Calu3 (cell line): ENCODE measurements at regions of chr2 and their contacts with region 1.

Region 1: GRCh38 chr2:213251618-213252017 is 32.6 kb upstream of the SPAG16 start:
- DNase-seq: no peak
- H3K4me3 Mint-ChIP-seq: no peak overlapping the region
- H3K27ac Mint-ChIP-seq: peak overlapping the region; percentile 40
- H3K4me1 Mint-ChIP-seq: peaks cover 16% of the 10 kb centered on the region
- H3K27me3 Mint-ChIP-seq: no peaks in the 10 kb centered on the region
- CTCF ChIP-seq: peak; percentile 62

Region 2: GRCh38 chr2:212609479-212609878 is 642.1 kb before region 1 on chr2:
- CTCF ChIA-PET with region 1: no interaction called
- intact Hi-C with region 1: no loop called
- DNase-seq: no peak
- H3K4me3 Mint-ChIP-seq: no peak overlapping the region
- H3K27ac Mint-ChIP-seq: no peak overlapping the region
- H3K4me1 Mint-ChIP-seq: no peaks in the 10 kb centered on the region
- H3K27me3 Mint-ChIP-seq: no peaks in the 10 kb centered on the region
- CTCF ChIP-seq: no peak

Region 3: GRCh38 chr2:212912445-212913103 is 339.0 kb before region 1 on chr2:
- CTCF ChIA-PET with region 1: no interaction called
- intact Hi-C with region 1: no loop called
- DNase-seq: peak; percentile 58
- H3K4me3 Mint-ChIP-seq: peak overlapping the region; percentile 63
- H3K27ac Mint-ChIP-seq: peak overlapping the region; percentile 95
- H3K4me1 Mint-ChIP-seq: peaks cover 56% of the 10 kb centered on the region
- H3K27me3 Mint-ChIP-seq: no peaks in the 10 kb centered on the region
- CTCF ChIP-seq: no peak

Region 4: GRCh38 chr2:213490087-213490486 is 238.5 kb after region 1 on chr2:
- CTCF ChIA-PET with region 1: interaction called, 4 read pairs
- intact Hi-C with region 1: loop called (anchors 10 kb)
- DNase-seq: no peak
- H3K4me3 Mint-ChIP-seq: no peak overlapping the region
- H3K27ac Mint-ChIP-seq: no peak overlapping the region
- H3K4me1 Mint-ChIP-seq: no peaks in the 10 kb centered on the region
- H3K27me3 Mint-ChIP-seq: no peaks in the 10 kb centered on the region
- CTCF ChIP-seq: no peak

Region 5: DNA sequence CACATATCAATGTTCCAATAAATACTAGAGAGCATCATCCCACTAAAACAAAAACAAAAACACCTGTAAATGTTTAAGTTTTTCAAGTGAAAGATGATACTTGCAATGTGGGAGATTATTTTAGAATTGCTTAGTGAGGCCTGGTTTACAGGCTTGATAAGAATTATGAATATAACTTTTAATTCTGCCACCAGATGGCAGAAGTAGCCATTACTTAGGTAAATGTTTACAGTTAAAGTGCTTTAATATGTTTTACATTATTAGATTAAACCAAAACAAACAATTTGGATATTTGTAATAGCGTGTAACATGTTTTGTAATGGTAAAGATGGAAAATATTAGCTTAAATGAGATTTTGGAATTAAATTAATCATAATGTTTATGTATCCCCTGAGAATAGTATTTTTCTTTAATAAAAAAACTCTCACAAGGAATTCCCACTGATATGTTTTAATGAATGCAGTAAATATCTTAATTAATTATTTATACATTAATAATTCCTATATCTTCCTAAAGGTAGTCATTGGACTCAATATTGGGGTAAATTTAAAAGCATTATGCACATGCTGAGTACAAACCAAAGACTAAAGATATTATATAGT is 554.6 kb after region 1 on chr2:
- CTCF ChIA-PET with region 1: no interaction called
- intact Hi-C with region 1: loop called (anchors 5 kb)
- DNase-seq: no peak
- H3K4me3 Mint-ChIP-seq: no peak overlapping the region
- H3K27ac Mint-ChIP-seq: no peak overlapping the region
- H3K4me1 Mint-ChIP-seq: no peaks in the 10 kb centered on the region
- H3K27me3 Mint-ChIP-seq: no peaks in the 10 kb centered on the region
- CTCF ChIP-seq: peak; percentile 41

Region 6: DNA sequence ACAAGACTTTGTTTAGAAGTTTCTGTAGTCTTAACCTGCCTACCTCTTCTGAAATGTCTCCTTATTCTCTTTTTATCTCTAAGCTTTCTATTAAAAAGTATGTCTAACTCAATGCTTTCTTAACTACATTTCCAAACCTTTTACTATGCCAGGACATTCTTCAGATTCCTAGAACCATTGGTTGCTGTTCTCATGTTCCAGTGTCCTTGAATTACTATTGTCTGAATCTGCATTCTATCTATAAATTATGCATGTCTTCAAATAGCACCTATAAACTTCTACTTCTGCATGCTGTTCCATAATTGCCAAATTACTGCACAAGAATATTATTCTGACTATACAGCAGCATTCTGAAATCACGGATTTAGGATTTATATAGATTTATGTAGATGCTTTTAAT is 993.2 kb after region 1 on chr2:
- CTCF ChIA-PET with region 1: no interaction called
- intact Hi-C with region 1: loop called (anchors 10 kb)
- DNase-seq: no peak
- H3K4me3 Mint-ChIP-seq: no peak overlapping the region
- H3K27ac Mint-ChIP-seq: peak overlapping the region; percentile 6
- H3K4me1 Mint-ChIP-seq: peaks cover 29% of the 10 kb centered on the region
- H3K27me3 Mint-ChIP-seq: no peaks in the 10 kb centered on the region
- CTCF ChIP-seq: no peak

Region 7: GRCh38 chr2:214809751-214810564 is 1558.3 kb after region 1 on chr2:
- CTCF ChIA-PET with region 1: no interaction called
- intact Hi-C with region 1: loop called (anchors 10 kb)
- DNase-seq: peak; percentile 100
- H3K4me3 Mint-ChIP-seq: peak overlapping the region; percentile 68
- H3K27ac Mint-ChIP-seq: peak overlapping the region; percentile 56
- H3K4me1 Mint-ChIP-seq: peaks cover 27% of the 10 kb centered on the region
- H3K27me3 Mint-ChIP-seq: no peaks in the 10 kb centered on the region
- CTCF ChIP-seq: no peak